K562 (cell line): ENCODE measurements at regions of chr2 and their contacts with region 1.

Region 1: GRCh38 chr2:222399038-222399783 is 25.1 kb upstream of the SGPP2 start:
- DNase-seq: no peak
- ATAC-seq: no peak
- H3K4me3 ChIP-seq: no peak overlapping the region
- H3K27ac ChIP-seq: no peak overlapping the region
- H3K4me1 ChIP-seq: no peaks in the 10 kb centered on the region
- H3K27me3 ChIP-seq: no peaks in the 10 kb centered on the region
- CTCF ChIP-seq: no peak
- EP300 ChIP-seq: no peak
- POLR2A ChIP-seq: no peak
- RAD21 ChIP-seq: no peak

Region 2: DNA sequence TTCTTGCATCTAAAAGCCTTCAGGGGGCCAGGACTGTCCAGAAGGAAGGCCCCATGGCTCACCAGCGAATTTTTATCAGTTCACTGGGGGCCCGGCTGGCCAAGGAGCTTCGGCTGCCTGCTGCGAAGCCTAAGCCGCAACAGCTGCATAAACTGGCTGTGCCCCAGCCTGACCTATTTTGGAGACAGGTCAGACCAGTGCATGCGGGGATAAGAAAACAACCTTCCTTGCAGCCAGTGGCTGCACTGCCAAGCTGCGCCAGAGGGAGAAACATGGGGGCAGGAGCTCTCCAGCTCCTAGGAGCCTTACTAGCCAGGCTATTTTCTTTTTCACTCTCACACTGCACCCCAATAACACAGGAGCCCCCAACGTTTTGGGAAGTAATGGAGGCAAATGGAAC is 115.6 kb before region 1 on chr2:
- CTCF ChIA-PET with region 1: no interaction called
- POLR2A ChIA-PET with region 1: no interaction called
- in situ Hi-C with region 1: no loop called
- intact Hi-C with region 1: no loop called
- DNase-seq: peak in 1 of 4 experiments; percentile 8
- ATAC-seq: no peak
- H3K4me3 ChIP-seq: no peak overlapping the region
- H3K27ac ChIP-seq: no peak overlapping the region
- H3K4me1 ChIP-seq: no peaks in the 10 kb centered on the region
- H3K27me3 ChIP-seq: no peaks in the 10 kb centered on the region
- CTCF ChIP-seq: no peak
- EP300 ChIP-seq: no peak
- POLR2A ChIP-seq: no peak
- RAD21 ChIP-seq: no peak

Region 3: DNA sequence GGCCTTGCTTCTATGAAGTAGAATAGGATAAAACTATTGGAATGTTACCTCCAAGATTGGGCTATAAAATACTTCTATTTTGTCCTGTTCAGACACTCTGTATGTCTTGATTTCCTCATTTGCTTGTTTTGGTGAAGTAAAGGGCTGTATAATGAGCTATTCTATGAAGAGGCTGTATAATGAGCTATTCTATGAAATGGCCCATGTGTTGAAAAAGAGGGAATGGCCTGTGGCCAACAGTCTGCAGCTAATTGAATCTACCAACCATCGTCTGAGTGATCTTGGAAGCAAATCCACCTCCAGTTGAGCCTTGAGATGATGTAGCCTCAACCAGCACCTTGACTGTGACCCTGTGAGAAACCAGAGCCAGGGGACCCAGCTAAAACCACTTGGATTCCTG is 21.3 kb after region 1 on chr2:
- CTCF ChIA-PET with region 1: no interaction called
- POLR2A ChIA-PET with region 1: no interaction called
- in situ Hi-C with region 1: no loop called
- intact Hi-C with region 1: loop called (anchors 1 kb)
- DNase-seq: no peak
- ATAC-seq: no peak
- H3K4me3 ChIP-seq: no peak overlapping the region
- H3K27ac ChIP-seq: no peak overlapping the region
- H3K4me1 ChIP-seq: no peaks in the 10 kb centered on the region
- H3K27me3 ChIP-seq: peaks cover 0 to 10% of the 10 kb centered on the region in 2 experiments; a peak in 3 of 5 replicates
- CTCF ChIP-seq: no peak
- EP300 ChIP-seq: no peak
- POLR2A ChIP-seq: no peak
- RAD21 ChIP-seq: no peak